ENCODE measurements at regions of chr15 and their contacts with region 1.

Region 1: GRCh38 chr15:77496710-77497103 is 76.0 kb downstream of the HMG20A start:
- DNase-seq: peak; percentile 40 to 84 (median 80)
- H3K4me3 ChIP-seq: peak overlapping the region in 50 of 59 donors; percentile 6 to 60 (median 33)
- H3K27ac ChIP-seq: peak overlapping the region; percentile 88 to 100 (median 99)
- H3K27me3 ChIP-seq: no peaks in the 10 kb centered on the region
- CTCF ChIP-seq: peak; percentile 70 to 96 (median 88)

Region 2: DNA sequence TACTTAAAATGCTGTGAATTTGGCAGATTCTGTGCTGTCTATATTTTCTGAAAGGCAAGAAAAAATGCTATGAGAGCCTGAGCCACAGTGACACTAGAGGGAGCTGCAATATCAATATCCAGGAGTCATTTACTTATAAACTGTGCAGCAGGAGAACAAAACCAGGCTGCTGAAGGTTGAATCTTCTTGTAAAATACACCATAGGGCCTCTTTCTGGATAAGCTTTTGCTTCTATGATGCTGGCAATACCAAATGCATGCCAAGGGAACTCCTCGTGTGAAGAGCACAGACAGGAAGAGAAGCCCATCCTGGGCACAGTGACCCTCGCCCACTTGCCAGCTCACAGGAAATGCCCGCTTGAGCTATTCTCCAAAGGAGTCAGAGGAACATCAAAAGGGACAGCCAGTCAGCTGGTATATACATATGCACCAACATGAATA is 377.8 kb before region 1 on chr15:
- intact Hi-C with region 1: loop called (anchors 2 to 5 kb)
- DNase-seq: peak in 2 of 10 donors; percentile 40 to 73
- H3K4me3 ChIP-seq: no peak overlapping the region
- H3K27ac ChIP-seq: peak overlapping the region in 26 of 59 donors; percentile 2 to 71 (median 38)
- H3K27me3 ChIP-seq: no peaks in the 10 kb centered on the region
- CTCF ChIP-seq: peak; percentile 54 to 93 (median 78)

Region 3: GRCh38 chr15:77186594-77187011 is 310.1 kb before region 1 on chr15:
- intact Hi-C with region 1: loop called (anchors 2 to 5 kb)
- DNase-seq: no peak
- H3K4me3 ChIP-seq: no peak overlapping the region
- H3K27ac ChIP-seq: peak overlapping the region in 44 of 59 donors; percentile 32 to 85 (median 68)
- H3K27me3 ChIP-seq: no peaks in the 10 kb centered on the region
- CTCF ChIP-seq: peak; percentile 39 to 79 (median 65)

Region 4: DNA sequence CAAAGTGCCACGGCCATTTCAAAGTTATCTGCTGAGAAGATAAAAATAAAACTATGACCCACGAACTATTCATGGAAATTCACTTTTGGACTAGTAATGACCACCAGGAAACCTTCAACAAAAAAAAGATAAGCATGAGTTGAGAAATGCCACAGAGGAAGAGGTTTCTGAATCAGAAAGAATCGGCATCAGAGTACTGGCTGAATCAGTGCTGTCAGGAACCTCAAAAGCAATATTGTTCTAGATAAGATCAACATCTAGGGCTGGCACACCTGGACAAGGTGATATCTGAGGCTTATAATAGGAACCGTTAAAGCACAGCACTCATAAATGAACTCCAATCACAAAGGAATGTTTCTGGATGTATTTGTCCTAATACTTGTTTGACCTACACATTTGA is 149.5 kb before region 1 on chr15:
- intact Hi-C with region 1: loop called in 1 of 2 experiments (anchors 10 kb)
- DNase-seq: no peak
- H3K4me3 ChIP-seq: peak overlapping the region in 2 of 59 donors; percentile 11 to 20
- H3K27ac ChIP-seq: peak overlapping the region in 15 of 59 donors; percentile 8 to 67 (median 42)
- H3K27me3 ChIP-seq: no peaks in the 10 kb centered on the region
- CTCF ChIP-seq: no peak

Region 5: GRCh38 chr15:77507911-77508310 is 11.2 kb after region 1 on chr15:
- intact Hi-C with region 1: no loop called
- DNase-seq: peak in 6 of 10 donors; percentile 55 to 71 (median 62)
- H3K4me3 ChIP-seq: peak overlapping the region in 23 of 59 donors; percentile 2 to 35 (median 20)
- H3K27ac ChIP-seq: peak overlapping the region; percentile 36 to 99 (median 93)
- H3K27me3 ChIP-seq: no peaks in the 10 kb centered on the region
- CTCF ChIP-seq: peak in 2 of 56 donors; percentile 4 to 21

Region 6: GRCh38 chr15:77533578-77534430 is 37.1 kb after region 1 on chr15:
- intact Hi-C with region 1: no loop called
- DNase-seq: peak in 3 of 10 donors; percentile 1 to 21 (median 10)
- H3K4me3 ChIP-seq: no peak overlapping the region
- H3K27ac ChIP-seq: peak overlapping the region in 14 of 59 donors; percentile 6 to 53 (median 30)
- H3K27me3 ChIP-seq: no peaks in the 10 kb centered on the region
- CTCF ChIP-seq: no peak

Region 7: DNA sequence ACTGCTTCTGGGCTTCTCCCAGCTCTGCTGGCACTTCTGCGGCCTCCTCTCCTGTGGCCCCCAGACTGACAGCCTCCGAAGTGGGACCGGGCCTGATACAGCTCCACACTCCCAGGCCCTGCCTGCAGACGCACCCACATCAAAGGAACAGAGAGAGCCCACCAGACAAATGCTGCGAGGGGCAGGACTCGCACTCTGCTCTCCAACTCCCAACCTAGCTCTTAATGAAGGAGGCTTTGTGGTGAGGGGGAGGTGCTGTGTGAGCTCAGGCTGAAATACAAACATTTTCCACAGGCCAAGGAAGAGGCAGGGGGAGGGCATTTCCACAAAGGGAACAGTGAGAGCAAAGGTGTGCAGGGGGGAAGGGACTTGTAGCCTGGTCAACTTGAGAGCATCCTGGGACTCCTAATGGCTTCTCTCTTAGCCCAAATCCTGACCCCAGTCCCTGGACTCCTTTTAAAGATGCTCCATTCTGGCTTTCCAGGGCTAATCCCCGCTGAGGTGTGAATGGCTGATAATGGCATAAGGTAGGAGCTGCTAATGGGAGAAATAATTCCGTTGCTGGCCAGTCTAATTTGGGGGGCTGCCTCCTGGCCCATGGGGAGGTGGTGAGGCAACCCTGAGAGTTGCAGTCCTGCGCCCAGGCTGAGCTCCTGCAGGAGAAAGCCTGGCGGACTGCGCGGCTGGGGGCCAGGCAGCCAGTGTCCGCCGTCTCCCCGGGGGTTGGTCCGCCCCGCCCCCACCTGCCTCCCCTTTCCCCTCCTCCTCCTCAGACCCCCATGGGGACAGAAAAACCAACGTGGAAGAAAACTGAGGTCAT is 126.4 kb after region 1 on chr15:
- intact Hi-C with region 1: no loop called
- DNase-seq: no peak
- H3K4me3 ChIP-seq: peak overlapping the region in 12 of 59 donors; percentile 3 to 42 (median 17)
- H3K27ac ChIP-seq: peak overlapping the region in 54 of 59 donors; percentile 4 to 87 (median 65)
- H3K27me3 ChIP-seq: no peaks in the 10 kb centered on the region
- CTCF ChIP-seq: no peak

Region 8: DNA sequence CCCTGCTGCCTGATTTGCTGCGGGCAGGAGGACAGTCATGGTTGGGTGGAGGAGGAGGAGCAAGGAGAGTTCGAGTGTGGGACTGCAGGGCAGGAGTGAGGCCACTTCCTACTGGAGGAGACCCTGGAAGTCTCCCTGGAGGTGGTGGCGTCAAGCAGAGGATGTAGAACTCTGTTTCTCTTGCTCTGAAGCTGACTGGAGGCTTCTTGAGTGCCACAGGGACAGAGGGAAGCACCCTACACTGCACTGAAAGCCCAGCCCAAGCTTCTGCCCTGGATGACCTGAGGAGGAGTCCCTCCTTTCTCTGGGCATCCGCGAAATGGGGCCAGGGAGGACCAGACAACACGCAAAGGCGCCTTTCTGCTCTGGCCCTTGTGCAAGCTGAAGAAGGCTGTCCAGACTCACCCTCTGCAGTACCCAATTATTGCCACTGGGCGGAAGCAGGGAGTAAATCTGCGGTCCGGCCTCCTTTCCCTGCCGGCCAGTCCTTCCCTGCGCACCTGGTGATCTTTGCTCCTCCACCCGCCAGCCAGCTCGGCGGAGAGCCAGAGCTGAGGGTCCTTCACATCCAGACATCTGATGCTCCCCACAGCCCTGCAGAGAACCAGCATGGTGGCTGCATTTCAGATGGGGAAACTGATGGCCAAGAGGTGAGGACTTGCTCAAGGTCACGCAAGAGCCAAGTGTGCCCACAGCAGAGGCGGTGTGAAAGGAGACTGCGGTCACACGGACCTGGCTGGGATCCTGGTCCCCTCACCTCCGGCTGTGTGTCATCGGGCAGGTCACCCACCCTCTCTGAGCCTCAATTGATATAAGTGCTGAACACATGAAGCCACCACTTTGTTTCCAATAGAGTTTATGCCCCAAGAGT is 373.7 kb after region 1 on chr15:
- intact Hi-C with region 1: no loop called
- DNase-seq: peak; percentile 43 to 76 (median 64)
- H3K4me3 ChIP-seq: peak overlapping the region in 1 of 59 donors; percentile 12
- H3K27ac ChIP-seq: peak overlapping the region in 2 of 59 donors; percentile 4 to 48
- H3K27me3 ChIP-seq: no peaks in the 10 kb centered on the region
- CTCF ChIP-seq: peak; percentile 52 to 95 (median 82)